Pancreas (tissue), 10 donors: ENCODE measurements at regions of chr9 and their contacts with region 1.

Region 1: DNA sequence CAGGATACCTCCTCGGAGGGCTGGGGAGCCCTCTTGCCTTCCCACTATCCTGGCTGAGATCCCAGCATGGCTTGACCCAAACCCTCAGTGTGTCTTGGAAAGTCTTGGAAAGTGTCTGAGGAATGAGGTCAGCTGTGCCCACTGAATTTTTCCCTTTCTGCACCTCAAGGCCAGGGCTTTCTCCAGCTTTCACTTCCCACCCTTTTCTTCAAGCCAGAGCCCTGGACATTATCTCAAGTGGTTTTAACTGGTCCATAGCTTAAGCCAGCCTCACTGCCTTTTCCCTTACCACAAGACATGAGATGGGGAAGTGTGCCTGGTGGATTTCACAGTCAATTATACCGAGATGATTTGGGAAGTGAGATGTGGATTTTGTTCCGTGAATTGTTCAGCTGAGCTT is 35.7 kb upstream of the LHX2 start:
- DNase-seq: no peak
- ATAC-seq: no peak
- H3K4me3 ChIP-seq: no peak overlapping the region
- H3K27ac ChIP-seq: no peak overlapping the region
- H3K4me1 ChIP-seq: no peaks in the 10 kb centered on the region
- H3K27me3 ChIP-seq: no peaks in the 10 kb centered on the region
- CTCF ChIP-seq: no peak

Region 2: GRCh38 chr9:123988311-123989049 is 12.6 kb after region 1 on chr9:
- intact Hi-C with region 1: loop called in 1 of 3 experiments (anchors 2 kb)
- DNase-seq: no peak
- ATAC-seq: no peak
- H3K4me3 ChIP-seq: no peak overlapping the region
- H3K27ac ChIP-seq: no peak overlapping the region
- H3K4me1 ChIP-seq: no peaks in the 10 kb centered on the region
- H3K27me3 ChIP-seq: no peaks in the 10 kb centered on the region
- CTCF ChIP-seq: no peak